Activated B cell treated with CpG ODN at 0.5 μM for 24 hours (primary cell): ENCODE measurements at regions of chr14 and their contacts with region 1.

Region 1: GRCh38 chr14:64387694-64388532 is at the start of gene MTHFD1:
- DNase-seq: peak; percentile 93
- ATAC-seq: peak; percentile 79
- H3K4me3 Mint-ChIP-seq: peak within 1 kb of the TSS; percentile 94
- H3K27ac Mint-ChIP-seq: peak within 1 kb of the TSS; percentile 94
- H3K4me1 Mint-ChIP-seq: peaks cover 52% of the 10 kb centered on the region
- H3K27me3 Mint-ChIP-seq: no peaks in the 10 kb centered on the region
- CTCF ChIP-seq: no peak
- total RNA-seq, gene MTHFD1: 91.4 and 98.4 TPM in 2 replicates

Region 2: GRCh38 chr14:63641473-63642228 is 746.3 kb before region 1 on chr14 and contains the start of gene WDR89:
- CTCF ChIA-PET with region 1: no interaction called
- POLR2A ChIA-PET with region 1: interaction called, 3 read pairs
- intact Hi-C with region 1: loop called (anchors 5 kb)
- DNase-seq: peak; percentile 84
- ATAC-seq: peak; percentile 83
- H3K4me3 Mint-ChIP-seq: peak within 1 kb of the TSS; percentile 92
- H3K27ac Mint-ChIP-seq: peak within 1 kb of the TSS; percentile 98
- H3K4me1 Mint-ChIP-seq: peaks cover 34% of the 10 kb centered on the region
- H3K27me3 Mint-ChIP-seq: no peaks in the 10 kb centered on the region
- CTCF ChIP-seq: no peak
- total RNA-seq, gene WDR89: 21.9 and 24.4 TPM in 2 replicates

Region 3: GRCh38 chr14:64324895-64325294 is 63.0 kb before region 1 on chr14:
- CTCF ChIA-PET with region 1: no interaction called
- POLR2A ChIA-PET with region 1: no interaction called
- intact Hi-C with region 1: no loop called
- DNase-seq: no peak
- ATAC-seq: no peak
- H3K4me3 Mint-ChIP-seq: no peak overlapping the region
- H3K27ac Mint-ChIP-seq: no peak overlapping the region
- H3K4me1 Mint-ChIP-seq: no peaks in the 10 kb centered on the region
- H3K27me3 Mint-ChIP-seq: no peaks in the 10 kb centered on the region
- CTCF ChIP-seq: no peak

Region 4: DNA sequence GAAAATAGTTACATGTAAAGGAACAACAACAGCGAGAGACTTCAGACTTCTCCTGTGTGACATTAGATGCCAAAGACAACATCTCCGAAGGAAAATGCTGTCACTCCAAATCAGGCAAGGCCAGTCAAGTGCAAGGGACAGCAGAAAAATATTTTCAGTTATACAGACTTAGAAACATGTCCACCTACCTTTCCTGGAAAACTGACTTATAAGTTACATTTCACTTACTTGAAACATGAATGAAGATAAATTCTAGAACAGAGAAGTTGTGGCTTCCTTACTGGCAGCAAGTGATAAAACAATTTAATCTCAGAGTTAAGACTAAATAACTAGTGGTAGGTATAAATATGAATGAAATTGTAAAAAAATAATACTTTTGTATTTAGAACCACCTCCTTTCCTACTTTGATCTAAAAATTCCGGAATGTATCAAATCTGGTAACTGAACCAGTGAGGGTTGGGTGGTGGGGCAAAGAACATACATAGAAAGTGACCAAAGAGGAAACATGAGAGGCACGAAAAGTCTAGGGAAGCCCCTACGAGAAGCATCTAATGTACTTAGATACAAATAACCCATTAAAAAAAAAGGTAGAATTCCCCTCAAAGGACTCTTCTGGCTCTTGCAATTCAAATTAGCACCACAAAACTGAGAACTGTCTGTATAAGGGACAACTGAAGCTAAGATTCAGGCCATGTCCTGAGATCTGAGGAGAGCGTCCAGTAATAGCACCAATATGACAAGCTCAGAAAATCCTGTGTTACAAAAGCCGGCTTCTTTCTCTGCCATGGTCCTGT is 21.4 kb after region 1 on chr14:
- CTCF ChIA-PET with region 1: no interaction called
- POLR2A ChIA-PET with region 1: interaction called, 3 read pairs
- intact Hi-C with region 1: loop called (anchors 1 kb)
- DNase-seq: no peak
- ATAC-seq: peak; percentile 69
- H3K4me3 Mint-ChIP-seq: peak overlapping the region; percentile 42
- H3K27ac Mint-ChIP-seq: peak overlapping the region; percentile 72
- H3K4me1 Mint-ChIP-seq: peaks cover 20% of the 10 kb centered on the region
- H3K27me3 Mint-ChIP-seq: no peaks in the 10 kb centered on the region
- CTCF ChIP-seq: no peak

Region 5: GRCh38 chr14:64444984-64445845 is 57.3 kb after region 1 on chr14:
- CTCF ChIA-PET with region 1: no interaction called
- POLR2A ChIA-PET with region 1: interaction called, 19 read pairs
- intact Hi-C with region 1: loop called (anchors 1 kb)
- DNase-seq: no peak
- ATAC-seq: peak; percentile 94
- H3K4me3 Mint-ChIP-seq: peak overlapping the region; percentile 39
- H3K27ac Mint-ChIP-seq: peak overlapping the region; percentile 93
- H3K4me1 Mint-ChIP-seq: peaks cover 53% of the 10 kb centered on the region
- H3K27me3 Mint-ChIP-seq: no peaks in the 10 kb centered on the region
- CTCF ChIP-seq: no peak

Region 6: GRCh38 chr14:64510825-64511671 is 123.1 kb after region 1 on chr14:
- CTCF ChIA-PET with region 1: interaction called, 3 read pairs
- POLR2A ChIA-PET with region 1: interaction called, 60 read pairs
- intact Hi-C with region 1: no loop called
- DNase-seq: no peak
- ATAC-seq: peak; percentile 36
- H3K4me3 Mint-ChIP-seq: peak overlapping the region; percentile 1
- H3K27ac Mint-ChIP-seq: peak overlapping the region; percentile 51
- H3K4me1 Mint-ChIP-seq: peaks cover 86% of the 10 kb centered on the region
- H3K27me3 Mint-ChIP-seq: no peaks in the 10 kb centered on the region
- CTCF ChIP-seq: peak; percentile 88

Region 7: DNA sequence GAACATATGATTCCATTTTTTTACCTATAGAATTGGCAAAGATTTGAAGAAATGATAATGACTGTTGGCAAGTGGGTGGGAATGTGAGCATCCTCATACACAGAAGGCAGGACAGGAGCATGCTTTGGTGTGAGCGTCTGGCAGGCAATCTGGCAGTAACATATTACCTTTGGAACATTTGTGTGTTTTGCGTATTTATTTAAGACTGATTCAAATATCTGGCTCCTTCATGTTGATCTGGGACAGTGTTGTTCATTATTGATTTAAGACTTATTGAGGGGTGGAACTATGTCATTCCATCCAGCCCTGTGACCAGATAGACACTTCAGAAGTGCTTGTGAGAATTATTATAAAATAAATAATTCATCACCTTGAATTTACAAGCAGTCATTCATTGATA is 214.9 kb after region 1 on chr14:
- CTCF ChIA-PET with region 1: no interaction called
- POLR2A ChIA-PET with region 1: no interaction called
- intact Hi-C with region 1: no loop called
- DNase-seq: no peak
- ATAC-seq: no peak
- H3K4me3 Mint-ChIP-seq: no peak overlapping the region
- H3K27ac Mint-ChIP-seq: no peak overlapping the region
- H3K4me1 Mint-ChIP-seq: no peaks in the 10 kb centered on the region
- H3K27me3 Mint-ChIP-seq: peaks cover 21% of the 10 kb centered on the region
- CTCF ChIP-seq: no peak

Region 8: GRCh38 chr14:64914237-64914971 is 526.5 kb after region 1 on chr14 and contains the start of gene CHURC1:
- CTCF ChIA-PET with region 1: no interaction called
- POLR2A ChIA-PET with region 1: interaction called, 5 read pairs
- intact Hi-C with region 1: loop called (anchors 1 kb)
- DNase-seq: peak; percentile 89
- ATAC-seq: peak; percentile 98
- H3K4me3 Mint-ChIP-seq: peak within 1 kb of the TSS; percentile 92
- H3K27ac Mint-ChIP-seq: peak within 1 kb of the TSS; percentile 88
- H3K4me1 Mint-ChIP-seq: peaks cover 43% of the 10 kb centered on the region
- H3K27me3 Mint-ChIP-seq: peaks cover 3% of the 10 kb centered on the region
- CTCF ChIP-seq: no peak
- total RNA-seq, gene CHURC1: 69.6 and 83.8 TPM in 2 replicates

Region 9: DNA sequence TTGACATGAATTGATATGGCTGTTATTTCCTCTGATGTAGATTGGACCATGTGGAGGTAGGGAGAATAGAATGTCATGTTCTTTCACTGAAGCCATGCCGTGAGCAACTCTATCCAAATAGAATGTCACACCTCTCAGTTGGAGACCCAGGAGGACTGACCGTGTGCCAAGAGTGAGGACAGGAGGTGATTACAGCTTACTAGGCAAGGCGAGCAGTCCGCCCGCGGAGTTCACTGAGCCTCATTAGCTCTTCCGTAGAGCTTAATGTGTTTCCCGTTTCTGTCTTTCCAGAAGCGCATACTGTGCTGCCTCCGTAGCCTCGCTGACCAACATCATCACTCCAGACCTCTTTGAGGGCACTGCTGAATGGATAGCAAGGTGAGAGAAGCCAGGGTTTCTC is 644.4 kb after region 1 on chr14:
- CTCF ChIA-PET with region 1: no interaction called
- POLR2A ChIA-PET with region 1: no interaction called
- intact Hi-C with region 1: no loop called
- DNase-seq: no peak
- ATAC-seq: no peak
- H3K4me3 Mint-ChIP-seq: no peak overlapping the region
- H3K27ac Mint-ChIP-seq: no peak overlapping the region
- H3K4me1 Mint-ChIP-seq: no peaks in the 10 kb centered on the region
- H3K27me3 Mint-ChIP-seq: no peaks in the 10 kb centered on the region
- CTCF ChIP-seq: no peak